BJ (cell line): ENCODE measurements at regions of chr17 and their contacts with region 1.

Region 1: GRCh38 chr17:55601874-55602364 is 90.7 kb upstream of the SMIM36 start:
- DNase-seq: no peak
- H3K4me3 ChIP-seq: no peak overlapping the region
- H3K27me3 ChIP-seq: peaks cover 7% of the 10 kb centered on the region; the same call in 1 of the 2 replicates
- CTCF ChIP-seq: peak; percentile 85

Region 2: DNA sequence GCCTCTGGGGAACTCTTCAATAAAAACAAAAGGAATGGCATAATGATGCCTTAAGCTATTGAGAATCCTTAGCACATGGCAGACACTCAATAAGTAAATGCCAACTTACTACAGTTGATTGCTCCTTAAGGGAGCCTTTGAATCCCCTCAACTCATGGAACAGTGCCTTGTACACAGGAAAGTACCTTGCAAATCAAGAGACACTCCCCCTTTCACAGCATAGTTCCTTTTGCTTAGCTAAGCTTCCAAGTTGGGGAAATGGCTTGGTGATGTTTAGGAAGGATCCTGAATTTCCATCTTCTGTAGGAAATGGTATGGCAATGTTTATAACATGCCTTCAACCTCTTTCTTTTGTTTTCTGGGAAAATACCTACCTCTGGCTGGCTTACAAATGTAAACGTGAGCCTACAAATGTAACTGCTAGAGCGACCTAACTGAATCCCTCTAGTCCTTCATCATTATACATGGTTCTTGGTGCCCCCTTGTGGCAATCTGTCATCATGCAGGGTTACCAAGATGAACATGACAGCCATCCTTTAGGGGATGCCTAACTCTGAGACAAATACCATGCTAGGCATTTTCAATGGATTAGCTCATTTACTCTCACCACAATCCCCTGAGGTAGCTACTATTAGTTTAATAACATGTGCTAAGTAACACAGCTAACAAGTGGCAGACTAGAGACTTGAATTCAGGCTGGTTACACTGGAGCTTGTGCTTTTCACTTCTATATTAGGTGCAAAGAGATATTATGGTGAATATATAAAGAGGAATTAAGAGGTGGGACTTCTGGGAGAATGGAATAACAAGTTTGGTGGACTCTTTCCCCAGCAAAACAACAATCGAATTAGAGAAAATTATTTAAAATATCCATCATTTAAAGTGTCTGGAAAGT is 245.2 kb before region 1 on chr17:
- CTCF ChIA-PET with region 1: no interaction called
- POLR2A ChIA-PET with region 1: no interaction called
- DNase-seq: no peak
- H3K4me3 ChIP-seq: no peak overlapping the region
- H3K27me3 ChIP-seq: no peaks in the 10 kb centered on the region
- CTCF ChIP-seq: peak; percentile 86

Region 3: GRCh38 chr17:55527540-55528118 is 74.3 kb before region 1 on chr17:
- CTCF ChIA-PET with region 1: interaction called, 263 read pairs
- POLR2A ChIA-PET with region 1: no interaction called
- DNase-seq: no peak
- H3K4me3 ChIP-seq: no peak overlapping the region
- H3K27me3 ChIP-seq: peaks cover 1% of the 10 kb centered on the region; the same call in 1 of the 2 replicates
- CTCF ChIP-seq: peak; percentile 74

Region 4: GRCh38 chr17:55549140-55549539 is 52.8 kb before region 1 on chr17:
- CTCF ChIA-PET with region 1: interaction called, 11 read pairs
- POLR2A ChIA-PET with region 1: no interaction called
- DNase-seq: no peak
- H3K4me3 ChIP-seq: no peak overlapping the region
- H3K27me3 ChIP-seq: no peaks in the 10 kb centered on the region; the same call in 1 of the 2 replicates
- CTCF ChIP-seq: peak; percentile 36

Region 5: GRCh38 chr17:55587608-55588139 is 14.2 kb before region 1 on chr17:
- CTCF ChIA-PET with region 1: interaction called, 13 read pairs
- POLR2A ChIA-PET with region 1: no interaction called
- DNase-seq: no peak
- H3K4me3 ChIP-seq: no peak overlapping the region
- H3K27me3 ChIP-seq: no peaks in the 10 kb centered on the region
- CTCF ChIP-seq: no peak

Region 6: DNA sequence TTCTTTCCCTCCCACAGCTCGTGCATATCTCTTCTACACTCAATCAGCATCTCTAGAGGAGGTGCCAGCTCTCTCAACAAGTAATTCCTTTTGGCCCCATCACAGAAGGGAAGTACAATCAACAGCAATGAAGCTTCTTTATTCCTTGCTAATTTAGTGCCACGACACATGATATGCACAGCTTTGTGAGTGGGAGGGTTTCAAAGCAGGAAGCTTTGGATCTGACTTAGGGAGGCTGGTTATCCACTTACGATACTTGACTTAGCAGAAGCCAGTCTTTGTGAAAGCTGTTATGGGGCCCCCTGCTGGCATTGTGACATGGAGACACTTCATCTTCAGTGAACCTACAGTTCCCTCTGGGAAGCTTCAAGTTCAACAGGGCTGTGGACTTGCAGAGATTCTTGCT is 39.8 kb after region 1 on chr17:
- CTCF ChIA-PET with region 1: interaction called, 19 read pairs
- POLR2A ChIA-PET with region 1: no interaction called
- DNase-seq: no peak
- H3K4me3 ChIP-seq: no peak overlapping the region
- H3K27me3 ChIP-seq: no peaks in the 10 kb centered on the region
- CTCF ChIP-seq: peak; percentile 81

Region 7: DNA sequence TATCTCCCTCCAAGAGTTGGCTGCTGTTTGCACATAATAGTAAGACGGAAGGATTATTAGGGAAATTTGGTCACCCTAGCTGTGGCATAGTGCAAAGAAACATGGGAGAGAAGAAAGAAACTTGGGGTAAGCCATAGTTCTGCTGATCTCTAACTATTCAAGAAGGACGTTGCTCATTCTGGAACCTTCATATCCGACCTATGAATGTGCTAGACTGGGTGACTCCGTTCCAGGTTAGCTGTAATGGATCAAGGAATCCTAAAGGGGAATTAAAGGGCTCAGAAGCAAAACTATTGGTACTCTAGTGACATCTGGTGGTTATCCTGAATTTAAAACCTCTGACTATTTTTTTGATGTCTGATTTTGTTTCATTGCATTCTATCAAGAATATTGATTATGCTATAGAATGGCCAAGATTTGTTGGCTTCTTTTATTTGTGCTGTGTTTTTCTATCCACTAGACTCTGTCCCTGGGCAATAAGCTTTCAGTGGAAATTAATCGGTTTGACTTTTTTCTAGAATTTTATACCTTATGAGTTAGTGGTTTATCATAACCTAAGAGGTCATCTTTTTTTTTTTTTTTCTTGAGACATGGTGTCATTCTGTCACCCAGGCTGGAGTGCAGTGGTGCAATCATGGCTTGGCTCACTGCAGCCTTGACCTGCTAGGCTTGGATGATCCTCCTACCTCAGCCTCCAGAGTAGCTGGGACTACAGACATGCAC is 168.4 kb after region 1 on chr17:
- CTCF ChIA-PET with region 1: interaction called, 53 read pairs
- POLR2A ChIA-PET with region 1: no interaction called
- DNase-seq: no peak
- H3K4me3 ChIP-seq: no peak overlapping the region
- H3K27me3 ChIP-seq: no peaks in the 10 kb centered on the region
- CTCF ChIP-seq: peak; percentile 46